ENCODE measurements at regions of chr11 and their contacts with region 1.

Region 1: GRCh38 chr11:114036156-114036811 is 23.2 kb upstream of the ZBTB16 start:
- DNase-seq: peak in 4 of 5 donors; percentile 51 to 54 (median 52)
- H3K4me3 ChIP-seq: no peak overlapping the region
- H3K4me3 Mint-ChIP-seq: peak overlapping the region in 5 of 8 donors; percentile 7 to 54 (median 28)
- H3K27ac ChIP-seq: no peak overlapping the region
- H3K27ac Mint-ChIP-seq: no peak overlapping the region
- H3K4me1 ChIP-seq: peaks cover 6% of the 10 kb centered on the region
- H3K4me1 Mint-ChIP-seq: peaks cover 0 to 9% (median 6%) of the 10 kb centered on the region in 4 donors
- H3K27me3 ChIP-seq: no peaks in the 10 kb centered on the region
- H3K27me3 Mint-ChIP-seq: no peaks in the 10 kb centered on the region

Region 2: DNA sequence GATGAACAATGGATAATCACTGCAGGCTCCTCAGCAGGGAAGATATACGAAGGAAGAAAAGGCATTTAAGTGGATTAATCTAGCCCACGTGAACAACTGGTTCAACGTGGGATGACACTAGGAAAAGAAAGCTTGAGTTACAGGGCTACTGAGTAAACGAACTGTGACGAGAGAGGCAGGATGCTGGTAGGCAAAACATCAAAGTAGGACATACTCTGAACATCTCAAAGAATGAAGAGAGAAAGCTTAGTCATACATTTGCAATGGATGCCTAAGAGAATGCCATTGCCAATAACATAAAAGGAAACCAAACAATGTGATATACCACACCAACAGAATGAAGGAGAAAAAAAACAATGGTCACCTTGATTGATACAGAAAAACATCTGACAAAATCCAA is 173.8 kb before region 1 on chr11:
- CTCF ChIA-PET with region 1: no interaction called
- POLR2A ChIA-PET with region 1: no interaction called
- intact Hi-C with region 1: no loop called
- DNase-seq: no peak
- H3K4me3 ChIP-seq: no peak overlapping the region
- H3K4me3 Mint-ChIP-seq: peak overlapping the region in 1 of 8 donors; percentile 11
- H3K27ac ChIP-seq: no peak overlapping the region
- H3K27ac Mint-ChIP-seq: peak overlapping the region in 3 of 7 donors; percentile 70 to 87 (median 82)
- H3K4me1 ChIP-seq: peaks cover 10% of the 10 kb centered on the region
- H3K4me1 Mint-ChIP-seq: peaks cover 15 to 22% (median 19%) of the 10 kb centered on the region in 4 donors
- H3K27me3 ChIP-seq: no peaks in the 10 kb centered on the region
- H3K27me3 Mint-ChIP-seq: no peaks in the 10 kb centered on the region

Region 3: GRCh38 chr11:113934761-113935160 is 101.5 kb before region 1 on chr11:
- CTCF ChIA-PET with region 1: no interaction called
- POLR2A ChIA-PET with region 1: no interaction called
- intact Hi-C with region 1: no loop called
- DNase-seq: peak in 3 of 5 donors; percentile 9 to 45 (median 10)
- H3K4me3 ChIP-seq: no peak overlapping the region
- H3K4me3 Mint-ChIP-seq: peak overlapping the region in 3 of 8 donors; percentile 5 to 55 (median 30)
- H3K27ac ChIP-seq: no peak overlapping the region
- H3K27ac Mint-ChIP-seq: peak overlapping the region in 2 of 7 donors; percentile 22 to 39
- H3K4me1 ChIP-seq: no peaks in the 10 kb centered on the region
- H3K4me1 Mint-ChIP-seq: peaks cover 6 to 15% (median 11%) of the 10 kb centered on the region in 4 donors
- H3K27me3 ChIP-seq: no peaks in the 10 kb centered on the region
- H3K27me3 Mint-ChIP-seq: peaks cover 7 to 11% of the 10 kb centered on the region in 2 donors

Region 4: DNA sequence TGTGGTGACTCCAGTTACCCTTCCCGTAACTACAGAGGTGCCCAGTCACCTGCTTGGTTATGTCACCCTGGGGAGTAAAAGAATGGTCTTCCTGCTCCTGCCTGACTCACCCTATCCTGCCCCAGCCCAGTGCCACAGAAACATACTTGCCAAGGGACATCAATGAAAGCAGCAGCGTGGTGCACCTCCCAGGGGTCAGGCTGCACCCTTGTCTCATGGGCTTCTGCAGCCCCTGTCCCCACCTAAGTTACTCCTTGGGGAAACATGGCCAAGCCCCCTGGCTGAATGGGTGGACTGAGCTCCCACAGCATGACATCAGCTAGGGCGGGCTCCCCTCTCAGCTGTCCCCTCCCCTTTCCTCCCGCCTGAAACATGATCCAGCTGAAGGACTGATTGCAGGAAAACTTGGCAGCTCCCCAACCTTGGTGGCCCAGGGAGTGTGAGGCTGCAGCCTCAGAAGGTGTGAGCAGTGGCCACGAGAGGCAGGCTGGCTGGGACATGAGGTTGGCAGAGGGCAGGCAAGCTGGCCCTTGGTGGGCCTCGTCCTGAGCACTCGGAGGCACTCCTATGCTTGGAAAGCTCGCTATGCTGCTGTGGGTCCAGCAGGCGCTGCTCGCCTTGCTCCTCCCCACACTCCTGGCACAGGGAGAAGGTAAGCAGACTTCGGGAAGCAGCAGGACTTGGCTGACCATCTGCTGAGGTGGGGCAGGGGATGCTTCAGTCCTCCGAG is 61.4 kb before region 1 on chr11 and contains the start of gene HTR3A:
- CTCF ChIA-PET with region 1: no interaction called
- POLR2A ChIA-PET with region 1: no interaction called
- intact Hi-C with region 1: no loop called
- DNase-seq: no peak
- H3K4me3 ChIP-seq: no peak within 1 kb of the TSS
- H3K4me3 Mint-ChIP-seq: no peak within 1 kb of the TSS
- H3K27ac ChIP-seq: no peak within 1 kb of the TSS
- H3K27ac Mint-ChIP-seq: no peak within 1 kb of the TSS
- H3K4me1 ChIP-seq: no peaks in the 10 kb centered on the region
- H3K4me1 Mint-ChIP-seq: peaks cover 0 to 2% (median 0%) of the 10 kb centered on the region in 4 donors
- H3K27me3 ChIP-seq: no peaks in the 10 kb centered on the region
- H3K27me3 Mint-ChIP-seq: peaks cover 7 to 10% of the 10 kb centered on the region in 2 donors
- total RNA-seq, gene HTR3A: not detected

Region 5: GRCh38 chr11:113994077-113994954 is 42.0 kb before region 1 on chr11:
- CTCF ChIA-PET with region 1: interaction called, 8 read pairs
- POLR2A ChIA-PET with region 1: no interaction called
- intact Hi-C with region 1: loop called (anchors 1 kb)
- DNase-seq: peak in 4 of 5 donors; percentile 18 to 33 (median 22)
- H3K4me3 ChIP-seq: no peak overlapping the region
- H3K4me3 Mint-ChIP-seq: no peak overlapping the region
- H3K27ac ChIP-seq: no peak overlapping the region
- H3K27ac Mint-ChIP-seq: no peak overlapping the region
- H3K4me1 ChIP-seq: no peaks in the 10 kb centered on the region
- H3K4me1 Mint-ChIP-seq: peaks cover 0 to 1% (median 0%) of the 10 kb centered on the region in 4 donors
- H3K27me3 ChIP-seq: no peaks in the 10 kb centered on the region
- H3K27me3 Mint-ChIP-seq: peaks cover 6 to 13% of the 10 kb centered on the region in 2 donors

Region 6: DNA sequence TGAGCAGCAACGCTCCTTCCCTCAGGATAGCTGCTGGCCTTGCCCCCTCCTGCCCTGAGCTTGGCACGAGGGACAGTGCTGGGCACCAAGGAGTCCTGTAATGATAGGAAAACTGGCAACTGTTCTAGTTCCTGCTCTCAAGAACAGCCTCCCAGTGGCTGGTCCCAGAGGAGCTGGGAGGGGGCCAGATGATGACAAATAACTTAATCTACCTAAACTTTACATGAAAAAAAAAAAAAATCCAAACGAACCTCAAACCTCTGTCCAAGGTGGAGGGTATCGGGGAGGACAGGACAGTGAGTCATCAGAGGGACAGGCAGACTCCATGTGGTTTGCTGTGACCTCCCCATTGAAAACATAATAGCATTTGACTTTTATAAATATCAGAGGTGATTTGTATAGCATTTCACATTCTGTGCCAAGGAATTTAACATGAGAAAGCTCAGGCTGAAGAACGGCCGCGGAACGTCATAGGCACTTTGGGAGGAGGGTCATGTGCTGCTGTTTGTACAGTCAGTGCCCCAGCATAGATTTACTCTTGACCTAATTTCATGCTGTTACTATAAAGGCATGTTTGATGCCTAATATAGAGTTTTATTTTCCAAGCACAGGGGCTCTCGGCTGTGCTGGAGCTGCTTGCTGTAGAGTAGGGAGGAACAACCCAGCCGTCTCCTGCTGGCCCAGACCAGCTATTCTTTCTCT is 161.7 kb after region 1 on chr11:
- CTCF ChIA-PET with region 1: interaction called, 61 read pairs
- POLR2A ChIA-PET with region 1: no interaction called
- intact Hi-C with region 1: loop called (anchors 1 kb)
- DNase-seq: no peak
- H3K4me3 ChIP-seq: no peak overlapping the region
- H3K4me3 Mint-ChIP-seq: no peak overlapping the region
- H3K27ac ChIP-seq: no peak overlapping the region
- H3K27ac Mint-ChIP-seq: peak overlapping the region in 1 of 7 donors; percentile 66
- H3K4me1 ChIP-seq: peaks cover 8% of the 10 kb centered on the region
- H3K4me1 Mint-ChIP-seq: peaks cover 5 to 21% (median 14%) of the 10 kb centered on the region in 4 donors
- H3K27me3 ChIP-seq: no peaks in the 10 kb centered on the region
- H3K27me3 Mint-ChIP-seq: no peaks in the 10 kb centered on the region